ENCODE measurements at regions of chr5 and their contacts with region 1.

Region 1: GRCh38 chr5:122053181-122054109 is 24.6 kb downstream of the LOX start:
- DNase-seq: no peak
- H3K4me3 ChIP-seq: no peak overlapping the region
- CTCF ChIP-seq: no peak

Region 2: DNA sequence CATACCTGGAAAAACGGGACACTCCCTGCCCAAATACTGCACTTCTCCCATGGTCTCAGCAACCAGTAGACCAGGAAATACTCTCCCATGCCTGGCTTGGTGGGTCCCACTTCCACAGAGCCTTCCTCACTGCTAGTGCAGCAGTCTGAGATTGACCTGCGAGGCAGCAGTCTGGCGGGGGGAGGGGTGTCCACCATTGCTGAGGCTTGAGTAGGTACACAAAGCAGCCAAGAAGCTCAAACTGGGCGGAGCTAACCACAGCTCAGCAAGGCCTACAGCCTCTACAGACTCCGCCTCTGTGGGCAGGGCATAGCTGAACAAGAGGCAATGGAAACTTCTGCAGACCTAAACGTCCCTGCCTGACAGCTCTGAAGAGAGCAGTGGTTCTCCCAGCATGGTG is 393.3 kb before region 1 on chr5:
- in situ Hi-C with region 1: no loop called
- DNase-seq: no peak
- H3K4me3 ChIP-seq: no peak overlapping the region
- CTCF ChIP-seq: no peak

Region 3: DNA sequence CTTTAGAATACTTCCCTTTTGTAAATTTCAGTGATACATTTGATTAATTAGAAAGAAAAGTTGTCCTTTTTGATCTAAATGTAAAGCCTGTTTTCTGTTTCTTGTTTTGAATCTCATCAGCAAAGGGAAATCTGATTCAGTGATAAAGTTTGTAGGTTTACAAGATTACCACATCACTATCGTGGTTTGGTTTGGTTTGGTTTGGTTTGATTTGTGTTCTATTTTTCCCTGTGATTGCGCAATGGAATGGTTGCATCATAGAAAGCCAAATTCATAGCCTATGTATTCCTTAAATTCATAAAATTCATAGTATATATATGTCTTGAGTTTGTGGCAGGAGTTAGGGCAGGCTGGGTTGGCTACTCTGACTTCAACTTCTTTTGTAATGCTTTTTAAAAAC is 76.5 kb before region 1 on chr5:
- in situ Hi-C with region 1: loop called (anchors 10 kb)
- DNase-seq: peak; percentile 23
- H3K4me3 ChIP-seq: no peak overlapping the region
- CTCF ChIP-seq: no peak

Measured in astrocyte of the cerebellum (primary cell).